PC-3 (cell line): ENCODE measurements at regions of chr18 and their contacts with region 1.

Region 1: DNA sequence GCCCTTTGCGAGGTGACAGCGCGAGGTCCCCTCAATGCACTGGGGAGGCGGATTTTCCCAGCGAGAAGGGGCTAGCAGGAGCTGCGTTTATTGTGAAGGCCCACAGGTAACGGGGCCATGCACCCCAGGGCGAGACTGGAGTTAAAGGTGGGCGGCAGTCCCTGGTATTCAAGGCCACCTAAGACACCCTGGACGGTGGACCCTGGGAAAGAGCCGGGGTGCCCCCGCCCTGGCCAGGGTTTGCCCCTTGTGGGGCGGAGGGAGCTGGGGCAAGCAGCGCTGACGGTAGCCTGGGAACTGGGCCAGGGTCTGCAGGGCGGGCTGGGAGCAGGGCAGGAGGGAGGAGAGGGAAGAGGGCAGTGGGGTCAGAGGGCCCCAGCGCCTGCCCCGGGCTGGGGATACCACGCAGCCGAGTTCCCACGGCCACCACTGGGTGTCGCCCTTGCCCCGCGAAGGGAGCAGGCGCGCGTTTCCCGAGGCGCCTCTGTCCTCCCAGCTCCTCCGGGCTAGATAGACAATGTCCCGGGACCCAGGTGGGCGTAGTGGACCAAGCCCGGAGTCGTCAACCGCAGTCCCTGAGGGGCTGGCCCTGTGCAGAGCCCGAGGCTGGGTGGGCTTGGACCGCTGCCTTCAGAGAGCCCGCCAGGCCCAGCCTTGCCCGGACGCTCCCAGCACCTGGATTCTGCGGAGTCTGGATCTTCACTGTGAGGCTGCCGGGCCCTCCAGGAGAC is 80.2 kb downstream of the SMAD4 start:
- DNase-seq: peak; percentile 22
- ATAC-seq: peak; percentile 90
- H3K4me3 ChIP-seq: no peak overlapping the region
- H3K27ac ChIP-seq: no peak overlapping the region
- H3K4me1 ChIP-seq: no peaks in the 10 kb centered on the region
- H3K27me3 ChIP-seq: no peaks in the 10 kb centered on the region
- CTCF ChIP-seq: peak; percentile 59

Region 2: GRCh38 chr18:51383116-51383515 is 272.9 kb after region 1 on chr18:
- CTCF ChIA-PET with region 1: no interaction called
- POLR2A ChIA-PET with region 1: no interaction called
- intact Hi-C with region 1: loop called (anchors 10 kb)
- DNase-seq: no peak
- ATAC-seq: no peak
- H3K4me3 ChIP-seq: no peak overlapping the region
- H3K27ac ChIP-seq: no peak overlapping the region
- H3K4me1 ChIP-seq: no peaks in the 10 kb centered on the region
- H3K27me3 ChIP-seq: no peaks in the 10 kb centered on the region
- CTCF ChIP-seq: no peak